Activated B cell treated with CpG ODN at 0.5 μM for 24 hours (primary cell): ENCODE measurements at regions of chr4 and their contacts with region 1.

Region 1: GRCh38 chr4:83012687-83013419 is 2.2 kb upstream of the LIN54 start:
- DNase-seq: peak; percentile 97
- ATAC-seq: peak; percentile 92
- H3K4me3 Mint-ChIP-seq: peak overlapping the region; percentile 94
- H3K27ac Mint-ChIP-seq: peak overlapping the region; percentile 92
- H3K4me1 Mint-ChIP-seq: peaks cover 44% of the 10 kb centered on the region
- H3K27me3 Mint-ChIP-seq: no peaks in the 10 kb centered on the region
- CTCF ChIP-seq: no peak

Region 2: DNA sequence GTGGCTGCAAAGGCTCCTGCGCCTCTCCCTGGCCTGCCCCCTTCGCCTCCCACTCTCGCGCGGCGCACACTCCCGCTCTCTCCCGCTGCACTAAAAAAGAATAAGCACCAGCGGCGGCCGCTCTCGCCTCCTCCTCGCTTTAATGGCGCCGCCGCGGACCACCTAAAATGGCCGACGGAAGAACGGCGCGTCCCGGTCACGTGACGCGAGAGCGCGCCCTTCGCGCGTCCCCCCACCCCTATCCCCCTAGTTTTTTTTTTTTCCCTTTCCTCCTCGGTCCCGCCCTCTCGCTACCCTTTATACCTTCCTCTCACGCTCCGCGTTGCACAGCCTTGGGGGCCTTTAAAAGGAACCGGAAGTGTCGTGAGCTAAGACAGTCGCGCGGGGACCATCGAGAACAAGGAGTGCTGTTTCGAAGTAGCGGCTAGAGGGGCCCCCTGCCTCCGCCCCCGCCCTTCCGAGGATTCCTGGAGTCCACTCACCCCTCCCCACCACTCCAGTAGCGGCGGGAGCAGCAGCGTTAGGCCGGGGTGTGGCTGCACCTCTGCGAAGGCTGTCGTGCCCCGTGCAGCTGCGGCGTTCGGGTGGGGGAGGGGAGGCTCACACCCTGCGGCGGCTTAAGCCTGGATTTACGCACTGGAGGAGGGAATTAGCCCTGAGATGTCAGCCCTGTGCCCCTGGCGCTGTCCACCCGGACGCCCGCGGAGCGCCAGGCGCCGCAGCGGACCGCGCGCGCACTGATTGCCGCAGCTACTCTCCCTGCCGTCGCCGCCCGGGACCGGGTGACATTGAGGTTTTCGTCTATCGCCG is 638.8 kb before region 1 on chr4 and contains the start of gene HNRNPD:
- CTCF ChIA-PET with region 1: no interaction called
- POLR2A ChIA-PET with region 1: interaction called, 6 read pairs
- intact Hi-C with region 1: loop called (anchors 1 kb)
- DNase-seq: peak; percentile 83
- ATAC-seq: peak; percentile 88
- H3K4me3 Mint-ChIP-seq: peak within 1 kb of the TSS; percentile 98
- H3K27ac Mint-ChIP-seq: peak within 1 kb of the TSS; percentile 100
- H3K4me1 Mint-ChIP-seq: peaks cover 55% of the 10 kb centered on the region
- H3K27me3 Mint-ChIP-seq: no peaks in the 10 kb centered on the region
- CTCF ChIP-seq: no peak
- total RNA-seq, gene HNRNPD: 300 and 350 TPM in 2 replicates

Region 3: GRCh38 chr4:82900331-82901128 is 112.3 kb before region 1 on chr4 and contains the start of gene THAP9:
- CTCF ChIA-PET with region 1: no interaction called
- POLR2A ChIA-PET with region 1: interaction called, 27 read pairs
- intact Hi-C with region 1: loop called (anchors 1 kb)
- DNase-seq: peak; percentile 92
- ATAC-seq: peak; percentile 90
- H3K4me3 Mint-ChIP-seq: no peak within 1 kb of the TSS
- H3K27ac Mint-ChIP-seq: no peak within 1 kb of the TSS
- H3K4me1 Mint-ChIP-seq: peaks cover 20% of the 10 kb centered on the region
- H3K27me3 Mint-ChIP-seq: no peaks in the 10 kb centered on the region
- CTCF ChIP-seq: no peak
- total RNA-seq, gene THAP9: 2.1 and 3.1 TPM in 2 replicates

Region 4: GRCh38 chr4:83083925-83084475 is 71.1 kb after region 1 on chr4:
- CTCF ChIA-PET with region 1: no interaction called
- POLR2A ChIA-PET with region 1: interaction called, 10 read pairs
- intact Hi-C with region 1: no loop called
- DNase-seq: peak; percentile 33
- ATAC-seq: peak; percentile 96
- H3K4me3 Mint-ChIP-seq: peak overlapping the region; percentile 57
- H3K27ac Mint-ChIP-seq: peak overlapping the region; percentile 90
- H3K4me1 Mint-ChIP-seq: peaks cover 50% of the 10 kb centered on the region
- H3K27me3 Mint-ChIP-seq: no peaks in the 10 kb centered on the region
- CTCF ChIP-seq: no peak

Region 5: DNA sequence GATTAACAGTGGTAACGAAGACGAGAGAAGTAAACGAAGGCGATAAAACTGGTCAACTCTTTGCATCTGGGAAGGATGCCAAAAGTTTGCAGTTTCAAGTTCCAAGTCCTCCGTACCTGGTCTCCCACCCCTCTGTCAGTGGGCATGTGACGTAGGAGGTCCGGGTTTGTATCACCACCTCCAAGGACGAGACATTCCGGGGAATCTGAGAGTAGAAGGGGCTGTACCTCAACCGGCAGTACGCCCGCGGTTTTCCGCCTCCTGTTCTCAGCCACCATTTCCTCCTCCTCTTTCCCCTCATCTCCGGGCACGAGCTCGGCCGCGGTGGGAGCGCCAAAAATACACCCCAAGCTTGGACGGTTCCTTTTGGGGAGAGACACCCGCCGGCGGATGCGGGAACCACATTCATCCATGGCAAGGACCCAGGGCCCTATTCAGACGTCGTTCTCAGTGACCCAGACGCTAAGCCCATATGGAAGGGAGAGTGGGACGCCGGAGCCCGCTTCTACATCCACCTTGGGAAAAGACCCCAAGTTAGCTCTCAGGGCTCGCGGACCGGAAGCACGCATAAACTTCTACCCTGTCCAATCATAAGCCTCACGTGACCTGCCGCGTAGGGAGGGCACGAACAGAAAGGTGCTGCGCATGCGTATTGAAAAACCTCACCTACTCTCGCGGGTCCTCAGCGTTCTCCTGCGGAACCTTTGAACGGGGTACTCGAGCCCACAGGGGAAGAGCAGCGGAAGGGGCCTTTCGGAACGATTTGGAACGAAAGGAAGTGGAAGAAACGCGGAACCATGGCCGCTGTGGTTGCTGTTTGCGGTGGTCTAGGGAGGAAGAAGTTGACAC is 442.7 kb after region 1 on chr4 and contains the starts of genes HELQ and MRPS18C:
- CTCF ChIA-PET with region 1: no interaction called
- POLR2A ChIA-PET with region 1: interaction called, 5 read pairs
- intact Hi-C with region 1: loop called (anchors 1 kb)
- DNase-seq: peak; percentile 82
- ATAC-seq: peak; percentile 92
- H3K4me3 Mint-ChIP-seq: peak within 1 kb of the TSS; percentile 99
- H3K27ac Mint-ChIP-seq: peak within 1 kb of the TSS; percentile 99
- H3K4me1 Mint-ChIP-seq: peaks cover 55% of the 10 kb centered on the region
- H3K27me3 Mint-ChIP-seq: no peaks in the 10 kb centered on the region
- CTCF ChIP-seq: no peak
- total RNA-seq, gene HELQ: 31.9 and 32.9 TPM in 2 replicates
- total RNA-seq, gene MRPS18C: 56.0 and 56.5 TPM in 2 replicates